ENCODE measurements at regions of chr14 and their contacts with region 1.

Region 1: DNA sequence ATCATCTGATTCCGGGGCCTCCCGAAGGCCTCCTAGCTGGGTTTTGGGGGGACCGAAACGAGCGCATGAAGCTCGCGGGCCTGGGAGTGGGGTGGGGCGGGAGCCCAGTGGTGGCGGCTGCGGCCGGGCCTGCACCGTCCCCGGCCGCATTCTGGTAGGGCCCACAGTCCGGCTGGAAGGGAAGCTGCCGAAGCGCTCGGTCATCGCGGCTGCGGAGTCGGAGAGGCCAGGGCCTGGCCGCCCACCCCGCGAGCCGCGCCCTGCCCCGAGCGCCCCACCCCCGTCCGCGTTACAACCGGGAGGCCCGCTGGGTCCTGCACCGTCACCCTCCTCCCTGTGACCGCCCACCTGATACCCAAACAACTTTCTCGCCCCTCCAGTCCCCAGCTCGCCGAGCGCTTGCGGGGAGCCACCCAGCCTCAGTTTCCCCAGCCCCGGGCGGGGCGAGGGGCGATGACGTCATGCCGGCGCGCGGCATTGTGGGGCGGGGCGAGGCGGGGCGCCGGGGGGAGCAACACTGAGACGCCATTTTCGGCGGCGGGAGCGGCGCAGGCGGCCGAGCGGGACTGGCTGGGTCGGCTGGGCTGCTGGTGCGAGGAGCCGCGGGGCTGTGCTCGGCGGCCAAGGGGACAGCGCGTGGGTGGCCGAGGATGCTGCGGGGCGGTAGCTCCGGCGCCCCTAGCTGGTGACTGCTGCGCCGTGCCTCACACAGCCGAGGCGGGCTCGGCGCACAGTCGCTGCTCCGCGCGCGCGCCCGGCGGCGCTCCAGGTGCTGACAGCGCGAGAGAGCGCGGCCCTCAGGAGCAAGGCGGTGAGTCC is at the start of gene KLC1:
- DNase-seq: peak; percentile 75 to 85
- H3K4me3 ChIP-seq: peak within 1 kb of the TSS; percentile 97 to 99 (median 97)
- H3K27ac ChIP-seq: peak within 1 kb of the TSS; percentile 96 to 99
- H3K4me1 ChIP-seq: peaks cover 5 to 12% of the 10 kb centered on the region in 2 donors
- H3K27me3 ChIP-seq: no peaks in the 10 kb centered on the region
- CTCF ChIP-seq: no peak
- POLR2A ChIP-seq: peak; percentile 71
- total RNA-seq, gene KLC1: 222 to 275 (median 253) TPM

Region 2: DNA sequence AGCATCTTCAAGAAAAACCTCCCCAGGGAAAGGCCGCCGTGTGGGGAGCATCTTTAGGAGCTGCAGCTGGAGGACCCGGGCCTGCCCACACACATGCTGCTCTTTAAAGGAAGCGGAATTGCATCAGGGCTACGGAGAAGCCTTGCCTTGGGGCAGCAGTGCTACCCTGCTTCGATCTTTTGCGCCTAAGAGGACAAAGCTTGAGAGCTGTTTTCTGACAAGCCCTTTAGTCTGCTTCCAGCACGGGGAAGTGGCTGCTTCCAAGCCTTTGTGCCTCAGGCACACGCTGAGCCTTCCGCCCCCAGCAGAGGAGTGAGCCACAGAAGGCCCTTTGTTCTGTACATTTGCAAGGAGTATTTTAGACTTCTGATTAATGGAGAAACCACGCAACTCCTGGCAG is 34.6 kb before region 1 on chr14:
- intact Hi-C with region 1: loop called (anchors 2 kb)
- DNase-seq: peak in 1 of 2 donors; percentile 81
- H3K4me3 ChIP-seq: peak overlapping the region in 1 of 3 donors; percentile 35
- H3K27ac ChIP-seq: peak overlapping the region; percentile 70 to 71
- H3K4me1 ChIP-seq: peaks cover 0 to 3% of the 10 kb centered on the region in 2 donors
- H3K27me3 ChIP-seq: no peaks in the 10 kb centered on the region
- CTCF ChIP-seq: no peak
- POLR2A ChIP-seq: no peak

Region 3: GRCh38 chr14:103657471-103657870 is 28.6 kb after region 1 on chr14:
- intact Hi-C with region 1: loop called (anchors 1 kb)
- DNase-seq: no peak
- H3K4me3 ChIP-seq: no peak overlapping the region
- H3K27ac ChIP-seq: peak overlapping the region in 1 of 2 donors; percentile 84
- H3K4me1 ChIP-seq: no peaks in the 10 kb centered on the region
- H3K27me3 ChIP-seq: no peaks in the 10 kb centered on the region
- CTCF ChIP-seq: no peak
- POLR2A ChIP-seq: no peak

Region 4: GRCh38 chr14:103675957-103676356 is 47.1 kb after region 1 on chr14:
- intact Hi-C with region 1: loop called (anchors 2 kb)
- DNase-seq: no peak
- H3K4me3 ChIP-seq: no peak overlapping the region
- H3K27ac ChIP-seq: no peak overlapping the region
- H3K4me1 ChIP-seq: no peaks in the 10 kb centered on the region
- H3K27me3 ChIP-seq: no peaks in the 10 kb centered on the region
- CTCF ChIP-seq: no peak
- POLR2A ChIP-seq: no peak

Region 5: GRCh38 chr14:103770902-103771301 is 142.0 kb after region 1 on chr14:
- intact Hi-C with region 1: no loop called
- DNase-seq: no peak
- H3K4me3 ChIP-seq: no peak overlapping the region
- H3K27ac ChIP-seq: no peak overlapping the region
- H3K4me1 ChIP-seq: no peaks in the 10 kb centered on the region
- H3K27me3 ChIP-seq: no peaks in the 10 kb centered on the region
- CTCF ChIP-seq: no peak
- POLR2A ChIP-seq: no peak

Region 6: DNA sequence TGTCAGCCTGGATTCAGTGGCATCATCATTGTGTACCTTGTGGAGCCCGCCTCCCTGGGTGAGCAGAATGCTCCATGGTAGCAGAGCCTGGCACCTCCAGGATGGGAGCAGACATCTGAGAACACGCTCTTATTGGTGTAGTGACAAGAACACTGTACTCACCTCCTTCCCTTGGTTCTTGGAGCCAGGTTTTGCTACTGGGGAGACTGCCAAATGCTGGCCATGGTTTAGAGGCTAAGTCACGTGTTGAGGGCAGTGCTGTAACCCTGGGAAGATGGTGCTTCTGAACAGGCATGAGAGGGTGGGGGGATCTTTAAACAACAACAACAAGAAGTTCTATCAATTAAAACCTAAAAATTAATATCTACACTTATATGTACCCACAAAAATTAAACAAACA is 409.0 kb after region 1 on chr14:
- intact Hi-C with region 1: no loop called
- DNase-seq: no peak
- H3K4me3 ChIP-seq: no peak overlapping the region
- H3K27ac ChIP-seq: no peak overlapping the region
- H3K4me1 ChIP-seq: no peaks in the 10 kb centered on the region
- H3K27me3 ChIP-seq: peaks cover 0 to 21% of the 10 kb centered on the region in 2 donors
- CTCF ChIP-seq: no peak
- POLR2A ChIP-seq: no peak